K562 (cell line): ENCODE measurements at regions of chr5 and their contacts with region 1.

Region 1: DNA sequence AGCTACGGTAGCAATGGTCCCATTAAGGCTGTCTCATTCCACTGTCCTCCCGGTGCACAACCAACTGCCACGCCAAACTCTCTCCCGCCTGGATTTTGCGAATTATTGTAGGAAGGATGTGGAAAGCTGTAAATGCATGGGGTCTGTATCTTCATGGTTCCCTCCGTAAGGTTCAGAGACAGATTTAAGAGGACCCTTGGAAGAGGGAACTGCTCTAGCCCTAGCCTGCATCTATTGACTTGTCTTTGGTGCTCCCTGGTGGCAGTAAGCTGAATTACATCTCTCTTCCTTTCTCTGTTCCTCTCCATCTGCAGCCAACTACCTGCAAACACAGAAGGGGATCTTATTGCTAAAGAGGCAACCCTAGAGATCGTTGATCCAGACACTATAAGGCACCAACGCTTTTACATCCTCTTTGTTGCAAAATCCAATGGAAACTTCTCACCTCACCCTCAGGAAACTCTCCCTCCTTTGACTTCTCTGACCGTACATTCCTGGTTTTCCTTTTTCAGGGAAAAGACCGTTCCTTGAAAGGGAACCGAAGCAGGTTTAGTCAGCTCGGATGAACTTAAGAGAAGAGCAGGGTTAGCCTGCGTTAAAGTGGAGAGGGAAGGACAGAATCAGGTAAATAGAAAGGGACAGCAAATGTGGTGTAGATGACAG is 11.9 kb downstream of the CAPSL start:
- DNase-seq: peak; percentile 61 to 79 (median 72)
- ATAC-seq: peak; percentile 90
- H3K4me3 ChIP-seq: no peak overlapping the region
- H3K27ac ChIP-seq: no peak overlapping the region
- H3K4me1 ChIP-seq: no peaks in the 10 kb centered on the region
- H3K27me3 ChIP-seq: peaks cover 0 to 5% of the 10 kb centered on the region in 2 experiments; a peak in 2 of 5 replicates
- CTCF ChIP-seq: peak; percentile 67 to 86 (median 81)
- EP300 ChIP-seq: no peak
- POLR2A ChIP-seq: no peak
- RAD21 ChIP-seq: peak; percentile 78 to 90

Region 2: DNA sequence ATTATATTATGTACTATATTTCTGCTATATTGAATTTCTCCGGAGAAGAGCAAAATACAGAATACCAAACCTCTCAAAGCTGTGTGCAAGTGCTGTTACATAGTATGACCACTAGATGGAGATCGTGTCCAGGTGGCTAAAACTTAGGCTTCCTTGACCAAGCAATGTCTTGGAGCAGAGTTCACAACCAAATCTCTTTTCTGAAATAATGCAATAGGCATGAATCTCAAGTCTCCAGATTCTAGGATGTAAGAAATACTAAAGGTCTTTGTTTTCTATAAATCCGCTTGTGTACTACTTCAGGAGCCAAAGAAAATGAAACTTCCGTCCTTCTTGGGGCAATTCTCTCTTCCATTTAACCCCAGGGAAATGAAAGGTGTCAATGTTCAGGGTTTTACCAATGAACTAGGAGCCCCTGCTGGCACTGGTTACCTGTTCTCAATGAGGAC is 1451.9 kb before region 1 on chr5:
- CTCF ChIA-PET with region 1: interaction called, 5 read pairs
- POLR2A ChIA-PET with region 1: no interaction called
- in situ Hi-C with region 1: loop called (anchors 5 kb)
- intact Hi-C with region 1: loop called (anchors 5 kb)
- DNase-seq: peak; percentile 68 to 72 (median 70)
- ATAC-seq: peak; percentile 93
- H3K4me3 ChIP-seq: no peak overlapping the region
- H3K27ac ChIP-seq: no peak overlapping the region
- H3K4me1 ChIP-seq: no peaks in the 10 kb centered on the region
- H3K27me3 ChIP-seq: peaks cover 14 to 28% of the 10 kb centered on the region in 2 experiments; a peak in 4 of 5 replicates
- CTCF ChIP-seq: peak; percentile 84 to 95 (median 87)
- EP300 ChIP-seq: no peak
- POLR2A ChIP-seq: no peak
- RAD21 ChIP-seq: peak; percentile 91 to 94

Region 3: DNA sequence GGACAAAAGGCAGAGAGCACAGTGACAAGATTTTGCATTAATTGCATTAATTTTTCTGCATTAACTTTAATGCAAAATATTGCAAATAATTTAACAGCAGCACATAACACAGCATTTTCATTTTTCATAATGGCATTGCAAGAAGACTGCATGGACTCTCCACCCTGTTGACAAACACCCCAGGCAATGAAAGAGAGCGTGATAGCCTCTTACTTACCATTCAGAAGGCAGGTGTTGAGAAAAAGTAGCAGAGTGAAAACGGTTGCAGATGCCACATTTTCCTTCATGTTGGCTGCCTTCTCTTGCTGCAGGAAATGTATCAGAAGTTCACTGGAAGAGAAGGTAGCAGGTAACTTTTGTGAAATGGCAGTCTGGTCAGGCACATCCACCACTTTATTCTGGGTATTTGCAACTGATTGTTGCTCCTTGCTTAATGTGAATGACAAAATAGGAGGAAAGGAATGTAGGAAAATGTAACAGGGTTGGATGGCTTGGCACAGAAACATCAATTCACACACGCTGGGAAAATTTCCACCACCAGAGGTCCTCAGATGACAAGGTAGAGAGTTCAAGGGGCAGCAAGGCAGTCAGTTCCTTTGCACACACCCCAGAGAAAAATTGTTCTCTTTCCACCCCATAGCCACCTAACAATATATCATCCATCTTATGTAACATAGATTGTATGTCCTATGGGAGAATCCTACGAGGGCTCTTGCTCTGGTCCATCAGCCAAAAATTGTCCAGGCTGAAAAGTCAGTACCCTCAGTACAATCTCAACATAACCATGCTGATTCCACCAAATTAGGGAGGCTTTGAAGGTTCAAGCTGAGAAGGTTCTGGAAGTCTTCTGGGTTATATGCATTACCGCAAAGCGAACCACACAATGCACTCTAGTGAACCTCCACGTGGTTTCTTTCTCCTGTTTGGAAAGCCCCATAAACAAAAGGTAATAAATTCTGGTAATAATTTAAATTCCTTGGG is 836.9 kb before region 1 on chr5:
- CTCF ChIA-PET with region 1: interaction called, 33 read pairs
- POLR2A ChIA-PET with region 1: no interaction called
- in situ Hi-C with region 1: loop called (anchors 5 kb)
- intact Hi-C with region 1: loop called (anchors 1 kb)
- DNase-seq: peak; percentile 51 to 61 (median 53)
- ATAC-seq: peak; percentile 87
- H3K4me3 ChIP-seq: no peak overlapping the region
- H3K27ac ChIP-seq: no peak overlapping the region
- H3K4me1 ChIP-seq: no peaks in the 10 kb centered on the region
- H3K27me3 ChIP-seq: no peaks in the 10 kb centered on the region; a peak in 1 of 5 replicates
- CTCF ChIP-seq: peak; percentile 70 to 86 (median 73)
- EP300 ChIP-seq: no peak
- POLR2A ChIP-seq: no peak
- RAD21 ChIP-seq: peak; percentile 81 to 90

Region 4: GRCh38 chr5:35229076-35230037 is 697.2 kb before region 1 on chr5:
- CTCF ChIA-PET with region 1: no interaction called
- POLR2A ChIA-PET with region 1: no interaction called
- in situ Hi-C with region 1: no loop called
- intact Hi-C with region 1: loop called (anchors 5 kb)
- DNase-seq: no peak
- ATAC-seq: peak; percentile 34; the same call in 2 of the 3 replicates
- H3K4me3 ChIP-seq: no peak overlapping the region
- H3K27ac ChIP-seq: no peak overlapping the region
- H3K4me1 ChIP-seq: peaks cover 0 to 4% of the 10 kb centered on the region in 2 experiments; a peak in 1 of 5 replicates
- H3K27me3 ChIP-seq: peaks cover 12 to 29% of the 10 kb centered on the region in 2 experiments; a peak in 4 of 5 replicates
- CTCF ChIP-seq: no peak
- EP300 ChIP-seq: no peak
- POLR2A ChIP-seq: no peak
- RAD21 ChIP-seq: no peak

Region 5: DNA sequence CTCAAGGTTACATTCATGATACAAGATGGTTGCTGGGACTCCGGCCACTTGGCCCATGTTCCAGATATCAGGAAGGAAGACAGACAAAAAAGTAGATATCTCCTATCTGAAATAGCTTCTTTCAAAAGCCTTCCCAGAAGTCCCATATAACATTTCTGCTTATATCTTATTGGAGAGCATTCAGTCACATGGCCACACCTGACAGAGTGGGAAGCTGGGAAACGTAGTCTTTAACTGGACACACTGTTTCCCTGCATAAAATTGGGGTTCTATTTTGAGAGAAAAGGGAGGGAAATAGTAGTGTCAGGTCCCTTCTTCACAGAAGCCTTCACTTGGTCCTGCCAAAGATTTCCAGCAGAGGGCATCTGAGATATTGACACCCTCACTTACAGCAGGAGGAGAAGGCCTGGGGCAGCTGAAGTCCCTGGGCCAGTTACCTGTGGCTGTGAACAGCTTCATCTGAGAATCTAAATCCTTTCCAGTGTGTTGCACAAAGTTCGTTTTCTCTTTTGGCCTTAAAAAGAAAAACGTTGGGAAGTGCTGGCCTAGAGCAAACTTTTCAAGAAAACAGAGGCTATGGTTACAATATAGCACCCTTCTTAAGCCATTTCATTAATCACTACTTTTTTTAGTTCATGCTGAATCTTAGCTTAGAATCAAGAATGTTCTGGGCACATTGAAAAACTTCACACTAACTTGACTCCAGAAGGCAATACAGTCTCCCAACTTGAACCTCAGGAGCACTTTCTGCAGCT is 275.3 kb before region 1 on chr5:
- CTCF ChIA-PET with region 1: no interaction called
- POLR2A ChIA-PET with region 1: no interaction called
- in situ Hi-C with region 1: no loop called
- intact Hi-C with region 1: loop called (anchors 5 kb)
- DNase-seq: peak in 1 of 4 experiments; percentile 8
- ATAC-seq: no peak
- H3K4me3 ChIP-seq: no peak overlapping the region
- H3K27ac ChIP-seq: no peak overlapping the region
- H3K4me1 ChIP-seq: no peaks in the 10 kb centered on the region
- H3K27me3 ChIP-seq: no peaks in the 10 kb centered on the region
- CTCF ChIP-seq: 0 out of 6 replicates have a peak, but pooled peaks of 1 of the 3 experiments have one; percentile 4
- EP300 ChIP-seq: no peak
- POLR2A ChIP-seq: no peak
- RAD21 ChIP-seq: no peak

Region 6: GRCh38 chr5:35777358-35778087 is 149.0 kb before region 1 on chr5:
- CTCF ChIA-PET with region 1: interaction called, 5 read pairs
- POLR2A ChIA-PET with region 1: no interaction called
- in situ Hi-C with region 1: no loop called
- intact Hi-C with region 1: loop called (anchors 1 kb)
- DNase-seq: peak; percentile 35 to 77 (median 53)
- ATAC-seq: peak; percentile 83
- H3K4me3 ChIP-seq: no peak overlapping the region
- H3K27ac ChIP-seq: no peak overlapping the region
- H3K4me1 ChIP-seq: no peaks in the 10 kb centered on the region
- H3K27me3 ChIP-seq: no peaks in the 10 kb centered on the region
- CTCF ChIP-seq: peak; percentile 49 to 68 (median 62); a peak in 5 of 6 replicates
- EP300 ChIP-seq: no peak
- POLR2A ChIP-seq: no peak
- RAD21 ChIP-seq: peak in 1 of 2 experiments; percentile 43; a peak in 3 of 4 replicates